Endothelial cell of umbilical vein (primary cell): ENCODE measurements at regions of chr12 and their contacts with region 1.

Region 1: DNA sequence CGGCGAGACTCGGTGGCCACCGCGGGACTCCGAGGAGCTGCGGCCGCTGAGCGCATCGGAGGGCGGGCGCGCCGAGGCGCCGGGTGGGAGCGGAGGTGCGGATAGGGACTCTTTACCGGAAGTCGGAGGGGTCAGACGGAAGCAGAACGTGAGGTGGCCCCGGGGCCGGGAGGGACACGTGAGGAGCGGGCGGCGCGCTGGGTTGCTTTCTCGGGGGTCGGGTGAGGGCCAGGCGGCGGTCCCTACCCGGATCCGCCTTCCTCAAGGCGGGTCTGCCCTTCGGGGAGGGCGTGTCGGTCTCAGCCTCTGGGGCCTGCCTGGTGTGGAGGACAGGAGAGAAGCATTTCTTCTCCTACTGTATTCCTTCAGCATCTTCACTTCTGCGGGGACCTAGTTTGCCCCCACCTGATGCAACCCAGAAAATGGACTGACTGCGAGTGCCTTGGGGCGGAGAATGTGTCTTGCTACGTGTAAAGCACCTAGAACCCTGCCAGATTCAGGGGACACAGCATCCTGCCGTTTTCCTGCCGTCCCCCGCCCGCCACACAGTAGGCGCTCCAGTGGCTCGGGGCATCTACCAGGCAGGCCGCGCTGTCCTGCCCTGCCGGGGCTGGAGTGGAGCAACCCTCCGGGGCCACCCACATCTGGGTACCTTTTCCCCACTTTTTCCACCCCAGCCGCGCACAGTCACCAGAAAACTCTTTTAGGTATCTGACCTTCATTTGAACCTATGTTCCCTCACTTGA is 517 bp upstream of the ATXN2 start:
- DNase-seq: peak; percentile 89
- H3K4me3 ChIP-seq: peak overlapping the region; percentile 17 to 85 (median 44)
- H3K27ac ChIP-seq: peak overlapping the region; percentile 80
- H3K4me1 ChIP-seq: peaks cover 24% of the 10 kb centered on the region
- H3K27me3 ChIP-seq: no peaks in the 10 kb centered on the region
- CTCF ChIP-seq: no peak
- POLR2A ChIP-seq: peak; percentile 81

Region 2: GRCh38 chr12:111570084-111570961 is 29.3 kb before region 1 on chr12:
- CTCF ChIA-PET with region 1: no interaction called
- POLR2A ChIA-PET with region 1: no interaction called
- dilution Hi-C with region 1: no loop called
- intact Hi-C with region 1: loop called (anchors 2 kb)
- DNase-seq: peak; percentile 69
- H3K4me3 ChIP-seq: no peak overlapping the region
- H3K27ac ChIP-seq: peak overlapping the region; percentile 30
- H3K4me1 ChIP-seq: peaks cover 32% of the 10 kb centered on the region
- H3K27me3 ChIP-seq: no peaks in the 10 kb centered on the region
- CTCF ChIP-seq: no peak
- POLR2A ChIP-seq: no peak

Region 3: GRCh38 chr12:111578274-111578970 is 21.2 kb before region 1 on chr12:
- CTCF ChIA-PET with region 1: no interaction called
- POLR2A ChIA-PET with region 1: no interaction called
- dilution Hi-C with region 1: no loop called
- intact Hi-C with region 1: loop called (anchors 1 kb)
- DNase-seq: peak; percentile 64
- H3K4me3 ChIP-seq: no peak overlapping the region
- H3K27ac ChIP-seq: peak overlapping the region; percentile 66
- H3K4me1 ChIP-seq: peaks cover 11% of the 10 kb centered on the region
- H3K27me3 ChIP-seq: no peaks in the 10 kb centered on the region
- CTCF ChIP-seq: no peak
- POLR2A ChIP-seq: no peak

Region 4: DNA sequence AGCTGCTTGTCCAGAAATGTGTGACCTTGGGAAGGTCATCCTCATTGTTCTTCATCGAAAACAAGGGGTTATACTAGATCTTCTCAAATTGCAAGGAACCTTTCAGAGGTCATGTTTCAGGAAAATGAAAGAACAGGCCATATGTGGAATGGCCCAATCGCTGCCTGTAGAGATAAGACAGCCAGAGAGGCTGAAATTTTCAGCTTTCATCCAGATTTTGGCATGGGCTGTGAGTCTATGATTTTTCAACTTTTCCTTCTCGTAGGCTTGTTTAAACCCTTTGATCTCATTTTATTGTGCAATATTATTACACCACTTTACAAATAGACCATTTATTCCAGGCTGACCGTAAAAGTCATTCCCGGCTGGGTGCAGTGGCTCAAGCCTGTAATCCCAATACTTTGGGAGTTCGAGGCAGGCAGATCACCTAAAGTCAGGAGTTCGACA is 16.6 kb after region 1 on chr12:
- CTCF ChIA-PET with region 1: no interaction called
- POLR2A ChIA-PET with region 1: no interaction called
- dilution Hi-C with region 1: no loop called
- intact Hi-C with region 1: no loop called
- DNase-seq: no peak
- H3K4me3 ChIP-seq: no peak overlapping the region
- H3K27ac ChIP-seq: no peak overlapping the region
- H3K4me1 ChIP-seq: no peaks in the 10 kb centered on the region
- H3K27me3 ChIP-seq: no peaks in the 10 kb centered on the region
- CTCF ChIP-seq: no peak
- POLR2A ChIP-seq: no peak